ENCODE measurements at regions of chr9 and their contacts with region 1.

Region 1: DNA sequence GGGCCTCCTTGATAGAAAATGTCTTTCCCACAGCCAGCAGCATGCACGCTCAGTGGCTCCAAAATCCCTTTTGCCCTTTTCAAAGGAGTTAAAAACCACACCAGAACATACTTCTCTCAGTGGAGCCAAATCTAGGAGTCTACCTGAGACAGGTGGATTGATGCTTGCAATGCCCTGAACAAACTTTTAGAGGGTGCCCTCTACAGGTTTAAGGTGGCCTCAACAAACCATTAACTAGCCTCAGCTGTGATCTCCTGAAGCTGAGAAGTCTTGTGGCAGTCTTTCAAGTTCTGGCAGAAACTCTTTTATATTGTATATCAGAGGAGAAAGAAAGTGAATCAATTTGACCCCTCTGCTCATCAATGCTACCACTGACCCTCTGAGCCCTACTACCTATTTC is 125.4 kb downstream of the MED27 start:
- DNase-seq: no peak
- ATAC-seq: peak; percentile 48; the same call in 1 of the 3 replicates
- H3K4me3 ChIP-seq: no peak overlapping the region
- H3K27ac ChIP-seq: no peak overlapping the region
- H3K4me1 ChIP-seq: no peaks in the 10 kb centered on the region
- H3K27me3 ChIP-seq: no peaks in the 10 kb centered on the region
- CTCF ChIP-seq: peak; percentile 33 to 48 (median 43); a peak in 5 of 6 replicates
- EP300 ChIP-seq: no peak
- POLR2A ChIP-seq: no peak
- RAD21 ChIP-seq: peak; percentile 33

Region 2: GRCh38 chr9:131915181-131915580 is 39.1 kb before region 1 on chr9:
- CTCF ChIA-PET with region 1: no interaction called
- POLR2A ChIA-PET with region 1: no interaction called
- RAD21 ChIA-PET with region 1: no interaction called
- SMC1A ChIA-PET with region 1: no interaction called
- in situ Hi-C with region 1: no loop called
- intact Hi-C with region 1: no loop called
- DNase-seq: no peak
- ATAC-seq: no peak
- H3K4me3 ChIP-seq: no peak overlapping the region
- H3K27ac ChIP-seq: no peak overlapping the region
- H3K4me1 ChIP-seq: no peaks in the 10 kb centered on the region
- H3K27me3 ChIP-seq: no peaks in the 10 kb centered on the region
- CTCF ChIP-seq: no peak
- EP300 ChIP-seq: no peak
- POLR2A ChIP-seq: no peak
- RAD21 ChIP-seq: no peak

Region 3: GRCh38 chr9:131965103-131965502 is 10.8 kb after region 1 on chr9:
- CTCF ChIA-PET with region 1: interaction called, 13 read pairs
- POLR2A ChIA-PET with region 1: interaction called, 3 read pairs
- RAD21 ChIA-PET with region 1: no interaction called
- SMC1A ChIA-PET with region 1: interaction called, 4 read pairs
- in situ Hi-C with region 1: no loop called
- intact Hi-C with region 1: no loop called
- DNase-seq: no peak
- ATAC-seq: no peak
- H3K4me3 ChIP-seq: no peak overlapping the region
- H3K27ac ChIP-seq: no peak overlapping the region
- H3K4me1 ChIP-seq: no peaks in the 10 kb centered on the region
- H3K27me3 ChIP-seq: no peaks in the 10 kb centered on the region
- CTCF ChIP-seq: no peak
- EP300 ChIP-seq: no peak
- POLR2A ChIP-seq: no peak
- RAD21 ChIP-seq: no peak

Region 4: DNA sequence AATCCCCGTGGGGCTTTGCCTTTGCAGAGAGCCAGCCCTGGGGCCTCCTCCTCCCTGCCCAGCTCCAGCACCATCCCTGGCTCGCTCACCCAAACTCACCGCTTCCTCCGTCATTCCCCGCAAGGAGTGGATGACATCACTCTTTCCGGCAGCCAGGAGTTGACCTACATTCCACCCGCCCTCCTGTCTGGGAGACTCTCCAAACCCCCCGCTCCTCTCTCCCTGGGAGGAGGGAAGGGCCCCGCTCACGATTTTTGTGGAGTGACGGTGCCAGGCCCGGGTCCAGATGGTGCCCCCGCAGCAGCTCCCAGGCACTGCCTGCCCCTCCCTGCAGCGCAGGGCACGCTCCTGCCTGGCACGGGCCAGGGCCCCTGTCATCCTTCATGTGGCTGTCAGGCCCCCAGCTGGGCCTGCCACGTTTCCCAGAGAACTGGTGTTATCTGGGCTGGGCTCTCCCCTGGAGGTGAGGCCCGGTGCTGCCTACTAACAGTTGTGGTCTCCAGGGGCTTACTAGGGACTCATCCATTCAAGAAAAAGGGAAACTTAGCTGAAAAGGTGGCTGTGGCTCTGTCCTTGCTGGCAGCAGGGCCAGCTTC is 259.8 kb after region 1 on chr9:
- CTCF ChIA-PET with region 1: no interaction called
- POLR2A ChIA-PET with region 1: no interaction called
- RAD21 ChIA-PET with region 1: no interaction called
- SMC1A ChIA-PET with region 1: no interaction called
- in situ Hi-C with region 1: no loop called
- intact Hi-C with region 1: no loop called
- DNase-seq: no peak
- ATAC-seq: no peak
- H3K4me3 ChIP-seq: no peak overlapping the region
- H3K27ac ChIP-seq: no peak overlapping the region
- H3K4me1 ChIP-seq: no peaks in the 10 kb centered on the region
- H3K27me3 ChIP-seq: peaks cover 0 to 5% of the 10 kb centered on the region in 2 experiments; a peak in 2 of 4 replicates
- CTCF ChIP-seq: no peak
- EP300 ChIP-seq: no peak
- POLR2A ChIP-seq: no peak
- RAD21 ChIP-seq: no peak

Region 5: DNA sequence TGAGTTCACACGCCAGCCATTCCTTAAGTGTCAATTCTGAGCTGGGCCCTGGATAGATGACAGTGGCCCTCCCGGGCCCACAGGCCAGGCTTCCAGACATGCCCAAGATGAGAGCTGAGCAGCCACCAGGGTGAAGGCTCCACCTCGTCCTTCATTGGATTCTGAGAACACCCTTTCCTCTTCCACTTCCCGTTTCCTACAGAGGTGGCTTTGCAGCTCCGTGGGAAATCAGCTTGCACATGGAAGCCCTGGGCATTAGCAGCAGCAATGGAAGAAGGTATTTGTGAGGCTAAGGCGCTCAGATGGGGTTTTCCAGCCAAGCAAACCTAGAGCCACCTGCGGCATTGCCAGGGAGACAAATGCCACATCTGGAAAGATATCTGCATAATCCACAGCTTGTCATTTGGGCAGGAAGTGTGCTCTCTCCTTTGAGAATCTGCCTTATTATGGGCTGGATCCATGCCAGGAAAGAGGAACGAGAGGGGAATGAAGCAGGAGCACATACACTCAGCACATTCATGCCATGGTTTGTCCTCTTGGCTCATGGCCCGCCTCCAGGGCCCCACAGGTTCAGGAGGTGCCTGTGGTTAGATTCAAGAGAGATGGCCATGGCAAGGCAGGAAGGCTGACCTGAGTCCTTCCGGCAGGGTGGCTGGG is 489.8 kb after region 1 on chr9:
- CTCF ChIA-PET with region 1: no interaction called
- POLR2A ChIA-PET with region 1: no interaction called
- RAD21 ChIA-PET with region 1: no interaction called
- SMC1A ChIA-PET with region 1: no interaction called
- in situ Hi-C with region 1: no loop called
- intact Hi-C with region 1: no loop called
- DNase-seq: no peak
- ATAC-seq: no peak
- H3K4me3 ChIP-seq: no peak overlapping the region
- H3K27ac ChIP-seq: no peak overlapping the region
- H3K4me1 ChIP-seq: no peaks in the 10 kb centered on the region
- H3K27me3 ChIP-seq: peaks cover 0 to 3% of the 10 kb centered on the region in 2 experiments; a peak in 1 of 4 replicates
- CTCF ChIP-seq: no peak
- EP300 ChIP-seq: no peak
- POLR2A ChIP-seq: no peak
- RAD21 ChIP-seq: no peak

Measured in GM12878 (cell line).